Gastrocnemius medialis (tissue), 4 donors: ENCODE measurements at regions of chr9 and their contacts with region 1.

Region 1: GRCh38 chr9:105318729-105319191 is 74.3 kb downstream of the SLC44A1 start:
- DNase-seq: no peak
- ATAC-seq: no peak
- H3K4me3 ChIP-seq: no peak overlapping the region
- H3K27ac ChIP-seq: no peak overlapping the region
- H3K4me1 ChIP-seq: no peaks in the 10 kb centered on the region
- H3K27me3 ChIP-seq: no peaks in the 10 kb centered on the region
- CTCF ChIP-seq: no peak
- POLR2A ChIP-seq: no peak

Region 2: DNA sequence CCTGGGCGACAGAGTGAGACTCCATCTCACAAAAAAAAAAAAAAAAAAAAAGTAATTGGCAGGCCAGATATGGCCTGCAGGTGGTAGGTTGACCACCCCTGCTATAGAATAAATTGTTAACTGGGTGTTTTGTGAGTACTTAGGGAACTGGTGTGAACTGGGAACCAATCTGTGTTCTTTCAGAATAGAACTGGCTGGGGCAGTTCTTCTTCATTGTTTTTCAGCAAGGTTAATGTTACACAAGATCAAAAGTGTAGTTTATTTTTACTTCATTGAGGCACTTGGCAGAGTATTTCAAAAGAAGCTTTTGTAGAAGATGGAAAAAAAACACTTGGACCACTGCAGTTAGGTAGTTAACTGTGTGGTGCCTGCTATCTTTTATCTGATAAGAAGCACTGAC is 52.9 kb after region 1 on chr9:
- in situ Hi-C with region 1: loop called in 1 of 4 experiments (anchors 10 kb)
- intact Hi-C with region 1: no loop called
- DNase-seq: no peak
- ATAC-seq: no peak
- H3K4me3 ChIP-seq: no peak overlapping the region
- H3K27ac ChIP-seq: no peak overlapping the region
- H3K4me1 ChIP-seq: no peaks in the 10 kb centered on the region
- H3K27me3 ChIP-seq: no peaks in the 10 kb centered on the region
- CTCF ChIP-seq: no peak
- POLR2A ChIP-seq: no peak